Breast epithelium (tissue), 4 donors: ENCODE measurements at regions of chr2 and their contacts with region 1.

Region 1: GRCh38 chr2:37472959-37473358 is 128.5 kb downstream of the QPCT start:
- DNase-seq: peak in 1 of 2 donors; percentile 29
- H3K4me3 ChIP-seq: no peak overlapping the region
- H3K27ac ChIP-seq: peak overlapping the region in 1 of 2 donors; percentile 26
- H3K4me1 ChIP-seq: no peaks in the 10 kb centered on the region
- H3K27me3 ChIP-seq: no peaks in the 10 kb centered on the region
- CTCF ChIP-seq: no peak
- POLR2A ChIP-seq: no peak

Region 2: GRCh38 chr2:38352336-38352735 is 879.4 kb after region 1 on chr2:
- intact Hi-C with region 1: loop called (anchors 5 kb)
- DNase-seq: no peak
- H3K4me3 ChIP-seq: no peak overlapping the region
- H3K27ac ChIP-seq: no peak overlapping the region
- H3K4me1 ChIP-seq: no peaks in the 10 kb centered on the region
- H3K27me3 ChIP-seq: no peaks in the 10 kb centered on the region
- CTCF ChIP-seq: no peak
- POLR2A ChIP-seq: no peak